Activated CD8-positive, alpha-beta memory T cell treated with anti-CD3 and anti-CD28 coated beads, Interleukin-2, amount 10 ng/mL, durations not matched to agents 7 days and 5 days (primary cell): ENCODE measurements at regions of chr14 and their contacts with region 1.

Region 1: DNA sequence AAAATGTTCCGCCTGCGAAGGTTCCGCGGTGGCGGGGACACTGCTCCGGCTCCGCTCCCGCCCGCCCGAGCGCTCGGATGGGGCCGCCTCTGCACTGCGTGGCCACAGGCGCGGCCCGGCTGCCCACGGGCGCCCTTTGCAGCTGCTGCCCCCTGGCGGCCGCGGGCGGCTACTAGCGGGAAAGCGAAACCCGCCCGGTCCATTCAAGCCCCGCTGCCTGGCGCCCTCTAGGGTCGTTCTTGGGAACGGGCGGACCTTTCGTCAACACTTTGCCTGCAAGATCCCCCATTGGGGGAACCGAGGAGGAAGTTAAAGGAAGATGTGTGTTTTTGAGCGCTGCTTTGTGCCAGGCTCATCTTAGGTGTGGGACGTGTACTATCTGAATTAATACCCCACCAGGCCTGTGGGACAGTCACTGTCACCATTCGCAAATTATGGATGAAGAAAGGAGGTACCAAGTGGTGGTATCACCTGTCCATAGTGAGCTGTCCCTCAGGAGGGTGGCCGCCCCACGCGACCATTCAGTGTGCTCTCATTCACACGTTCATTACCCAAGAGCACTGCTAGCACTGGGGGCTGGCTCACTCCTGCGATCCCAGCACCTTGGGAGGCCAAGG is 19.4 kb downstream of the GPR132 start:
- DNase-seq: peak; percentile 95
- ATAC-seq: peak; percentile 87
- H3K4me3 Mint-ChIP-seq: no peak overlapping the region
- H3K27ac Mint-ChIP-seq: peak overlapping the region; percentile 44
- H3K4me1 Mint-ChIP-seq: peaks cover 25% of the 10 kb centered on the region
- H3K27me3 Mint-ChIP-seq: peaks cover 12% of the 10 kb centered on the region

Region 2: GRCh38 chr14:104923640-104924420 is 122.0 kb before region 1 on chr14:
- CTCF ChIA-PET with region 1: no interaction called
- DNase-seq: no peak
- ATAC-seq: no peak
- H3K4me3 Mint-ChIP-seq: no peak overlapping the region
- H3K27ac Mint-ChIP-seq: no peak overlapping the region
- H3K4me1 Mint-ChIP-seq: no peaks in the 10 kb centered on the region
- H3K27me3 Mint-ChIP-seq: peaks cover 19% of the 10 kb centered on the region

Region 3: DNA sequence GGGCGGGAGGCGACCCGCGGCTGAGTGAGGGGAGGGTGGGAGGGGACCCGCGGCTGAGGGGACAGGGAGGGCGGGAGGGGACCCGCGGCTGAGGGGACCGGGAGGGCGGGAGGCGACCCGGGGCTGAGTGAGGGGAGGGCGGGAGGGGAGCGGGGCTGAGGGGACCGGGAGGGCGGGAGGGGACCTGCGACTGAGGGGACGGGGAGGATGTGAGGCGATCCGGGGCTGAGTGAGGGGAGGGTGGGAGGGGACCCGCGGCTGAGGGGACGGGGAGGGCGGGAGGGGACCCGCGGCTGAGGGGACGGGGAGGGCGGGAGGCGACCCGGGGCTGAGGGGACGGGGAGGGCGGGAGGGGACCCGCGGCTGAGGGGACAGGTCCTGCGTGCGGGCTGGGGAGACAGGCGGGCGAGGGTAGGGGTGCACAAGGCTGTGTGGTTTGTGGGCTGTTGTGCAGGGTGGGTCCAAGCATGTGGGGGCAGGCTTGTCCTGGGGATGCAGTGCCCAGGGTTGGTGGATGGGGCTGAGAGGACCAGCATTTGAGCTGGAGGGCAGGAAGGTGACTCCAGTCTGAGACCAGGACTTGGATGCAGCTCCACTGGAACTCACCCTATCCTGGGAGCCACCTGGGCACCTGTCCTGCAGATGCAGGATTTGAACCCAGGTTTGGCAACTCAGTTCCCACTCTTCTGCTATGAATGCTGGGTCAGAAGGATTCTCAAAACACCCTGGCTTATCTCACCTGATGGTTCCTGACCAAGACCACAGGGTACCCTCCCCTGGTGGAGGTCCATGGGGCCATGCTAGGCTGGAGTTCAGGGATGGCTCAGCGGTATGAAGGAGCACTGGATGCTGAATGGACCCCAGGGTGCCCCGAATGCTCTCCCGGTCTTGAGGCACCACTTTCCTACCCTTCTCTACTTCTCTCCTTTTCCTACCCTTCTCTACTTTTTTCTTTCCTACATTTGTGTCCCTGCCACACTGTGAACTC is 111.8 kb before region 1 on chr14:
- CTCF ChIA-PET with region 1: interaction called, 13 read pairs
- DNase-seq: no peak
- ATAC-seq: no peak
- H3K4me3 Mint-ChIP-seq: peak overlapping the region; percentile 42
- H3K27ac Mint-ChIP-seq: no peak overlapping the region
- H3K4me1 Mint-ChIP-seq: peaks cover 2% of the 10 kb centered on the region
- H3K27me3 Mint-ChIP-seq: peaks cover 39% of the 10 kb centered on the region

Region 4: DNA sequence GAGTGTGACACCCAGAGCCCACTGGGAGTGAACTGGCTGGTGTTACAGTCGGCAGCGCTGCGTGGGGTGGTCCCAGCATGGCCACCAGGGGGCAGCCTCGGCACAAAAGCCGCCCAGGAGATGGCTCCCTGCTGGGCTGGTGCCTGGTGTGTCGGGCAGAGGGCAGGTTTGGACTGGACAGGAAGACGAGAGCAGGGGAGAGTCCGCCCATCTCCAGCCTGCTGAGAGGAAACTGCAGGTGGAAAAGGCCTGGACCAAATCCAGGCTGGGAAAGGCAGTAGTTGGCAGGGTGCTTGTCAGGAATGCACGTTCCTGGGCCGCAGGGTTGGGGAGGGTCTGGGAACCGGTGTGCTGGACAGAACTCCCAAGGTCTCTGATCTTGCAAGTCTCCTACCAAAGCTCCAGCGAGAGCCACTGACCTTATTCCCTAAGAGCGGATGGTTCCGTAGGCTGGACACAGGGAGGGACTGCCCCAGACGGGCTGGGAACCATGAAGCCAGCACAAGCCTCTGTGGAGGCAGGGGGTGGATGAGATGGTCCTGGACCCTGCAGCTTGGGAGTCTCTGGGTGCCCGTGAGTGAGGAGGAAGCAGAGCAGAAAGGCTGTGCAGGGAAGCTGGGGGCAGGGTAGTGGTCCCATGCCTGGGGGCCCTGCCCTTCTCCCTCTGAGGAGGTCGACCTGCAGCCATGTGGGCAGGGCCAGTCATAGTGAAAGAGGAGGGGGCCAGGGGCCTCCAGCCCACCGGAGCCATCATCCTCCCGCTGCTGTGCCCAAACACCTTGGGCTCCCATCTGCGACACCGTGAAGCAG is 69.4 kb before region 1 on chr14:
- CTCF ChIA-PET with region 1: interaction called, 140 read pairs
- DNase-seq: peak; percentile 88
- ATAC-seq: peak; percentile 85
- H3K4me3 Mint-ChIP-seq: no peak overlapping the region
- H3K27ac Mint-ChIP-seq: no peak overlapping the region
- H3K4me1 Mint-ChIP-seq: peaks cover 10% of the 10 kb centered on the region
- H3K27me3 Mint-ChIP-seq: peaks cover 33% of the 10 kb centered on the region

Region 5: GRCh38 chr14:104993808-104994591 is 51.8 kb before region 1 on chr14:
- CTCF ChIA-PET with region 1: interaction called, 17 read pairs
- DNase-seq: no peak
- ATAC-seq: no peak
- H3K4me3 Mint-ChIP-seq: no peak overlapping the region
- H3K27ac Mint-ChIP-seq: no peak overlapping the region
- H3K4me1 Mint-ChIP-seq: no peaks in the 10 kb centered on the region
- H3K27me3 Mint-ChIP-seq: no peaks in the 10 kb centered on the region

Region 6: GRCh38 chr14:105020815-105021655 is 24.8 kb before region 1 on chr14 and contains the start of gene CDCA4:
- CTCF ChIA-PET with region 1: interaction called, 96 read pairs
- DNase-seq: peak; percentile 98
- ATAC-seq: peak; percentile 85
- H3K4me3 Mint-ChIP-seq: peak within 1 kb of the TSS; percentile 98
- H3K27ac Mint-ChIP-seq: peak within 1 kb of the TSS; percentile 90
- H3K4me1 Mint-ChIP-seq: peaks cover 72% of the 10 kb centered on the region
- H3K27me3 Mint-ChIP-seq: no peaks in the 10 kb centered on the region
- total RNA-seq, gene CDCA4: 70.8 to 77.8 TPM

Region 7: DNA sequence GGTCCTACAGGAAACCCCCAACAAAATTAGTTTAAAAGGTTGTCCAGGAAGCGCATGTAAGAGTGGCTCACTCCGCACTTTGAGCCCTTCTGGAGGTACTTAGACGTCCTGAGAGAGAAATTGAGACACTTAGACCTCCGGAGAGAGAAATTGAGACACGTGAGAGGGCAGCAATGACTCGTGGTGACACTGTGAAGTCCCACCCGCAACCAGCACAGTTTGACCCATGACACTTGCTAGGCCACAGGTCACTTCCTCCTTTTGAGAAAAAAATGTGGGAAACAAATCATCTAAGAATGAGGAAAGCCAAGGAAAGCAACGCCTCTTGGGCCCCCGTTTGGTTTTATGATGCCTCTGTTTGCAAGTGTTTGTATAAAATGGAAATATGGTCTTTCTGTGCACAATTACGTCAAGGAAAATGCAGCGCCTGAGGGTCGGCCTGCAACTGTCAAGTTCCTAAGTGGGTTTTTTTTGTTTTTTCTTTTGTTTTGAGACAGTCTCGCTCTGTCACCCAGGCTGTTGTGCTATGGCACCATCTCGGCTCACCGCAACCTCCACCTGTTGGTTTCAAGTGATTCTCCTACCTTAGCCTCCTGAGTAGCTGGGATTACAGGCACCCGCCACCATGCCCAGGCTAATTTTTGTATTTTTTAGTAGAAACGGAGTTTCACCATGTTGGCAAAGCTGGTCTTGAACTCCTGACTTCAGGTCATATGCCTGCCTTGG is 11.3 kb before region 1 on chr14:
- CTCF ChIA-PET with region 1: interaction called, 32 read pairs
- DNase-seq: no peak
- ATAC-seq: no peak
- H3K4me3 Mint-ChIP-seq: no peak overlapping the region
- H3K27ac Mint-ChIP-seq: no peak overlapping the region
- H3K4me1 Mint-ChIP-seq: peaks cover 15% of the 10 kb centered on the region
- H3K27me3 Mint-ChIP-seq: peaks cover 12% of the 10 kb centered on the region

Region 8: DNA sequence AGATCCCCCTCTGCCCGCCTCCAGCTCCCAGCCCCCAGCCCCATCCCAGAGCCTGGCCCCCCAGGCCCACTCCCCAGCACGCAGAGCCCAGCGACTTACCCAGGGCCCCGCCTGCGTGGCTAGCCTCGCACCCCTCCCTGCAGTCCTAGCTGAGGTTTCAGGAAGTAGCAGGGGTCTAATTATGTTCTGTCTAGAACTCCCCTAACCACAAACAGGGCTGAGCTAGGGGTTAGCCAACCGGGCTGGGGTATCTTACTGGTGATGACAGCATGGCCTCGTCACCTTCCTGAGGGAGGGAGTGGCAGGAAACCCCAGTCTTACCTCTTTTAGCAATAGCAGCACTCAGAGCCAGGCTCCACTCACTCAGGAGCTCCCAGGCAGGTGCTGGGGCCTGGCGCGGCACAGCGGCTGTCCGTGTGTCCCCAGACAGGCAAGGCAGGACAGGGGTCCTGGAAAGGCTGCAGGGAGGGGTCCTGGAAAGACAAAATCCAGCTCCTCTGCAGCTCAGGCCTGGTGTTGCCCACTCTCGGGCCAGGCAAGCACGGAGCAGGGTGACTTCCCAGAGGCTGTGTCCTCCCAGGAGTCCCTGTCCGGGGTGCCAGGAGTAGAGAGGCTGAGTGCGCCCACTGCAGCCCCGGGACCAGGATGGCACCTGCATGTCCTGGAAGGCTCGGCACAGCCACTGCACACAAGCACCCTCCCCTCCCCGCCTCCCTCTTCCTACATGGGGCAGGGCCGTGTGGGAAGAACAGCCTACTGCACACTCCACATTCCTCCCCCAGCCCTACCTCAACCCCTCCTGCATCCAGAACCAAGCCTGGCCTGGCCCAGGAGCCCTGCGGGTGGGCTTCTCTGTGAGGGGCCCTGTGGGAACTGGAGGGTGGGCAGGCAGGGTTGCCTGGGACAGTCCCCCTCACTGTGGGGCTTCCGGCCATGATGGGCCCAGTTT is 19.7 kb after region 1 on chr14 and contains the start of gene GPR132:
- CTCF ChIA-PET with region 1: interaction called, 95 read pairs
- DNase-seq: peak; percentile 98
- ATAC-seq: peak; percentile 76
- H3K4me3 Mint-ChIP-seq: peak within 1 kb of the TSS; percentile 95
- H3K27ac Mint-ChIP-seq: peak within 1 kb of the TSS; percentile 97
- H3K4me1 Mint-ChIP-seq: peaks cover 65% of the 10 kb centered on the region
- H3K27me3 Mint-ChIP-seq: no peaks in the 10 kb centered on the region
- total RNA-seq, gene GPR132: 47.4 to 49.4 TPM